ENCODE measurements at regions of chr3 and their contacts with region 1.

Region 1: DNA sequence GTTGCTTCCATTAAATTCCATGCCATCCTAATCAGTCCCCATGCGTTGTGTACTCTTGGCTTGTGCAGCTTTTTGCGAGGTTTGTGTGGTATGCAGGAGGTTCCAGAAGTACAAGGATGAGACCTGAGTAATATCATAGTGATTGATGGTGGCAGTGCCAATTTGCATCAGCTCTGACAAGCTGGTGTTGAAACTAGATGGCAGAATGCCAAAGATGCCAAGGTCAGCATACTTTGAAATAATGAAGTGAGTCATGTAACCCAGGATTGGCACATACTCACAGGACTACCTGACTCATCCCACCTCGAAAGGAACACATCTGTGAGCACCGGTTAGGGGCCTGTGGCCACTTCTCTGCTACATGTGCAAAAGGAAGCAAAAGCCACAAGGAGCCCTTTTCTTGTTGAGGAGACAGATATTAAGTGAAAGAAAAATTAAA is 14.3 kb downstream of the KAT2B start:
- DNase-seq: peak; percentile 100
- H3K4me3 Mint-ChIP-seq: no peak overlapping the region
- H3K27ac Mint-ChIP-seq: no peak overlapping the region
- H3K4me1 Mint-ChIP-seq: no peaks in the 10 kb centered on the region
- H3K27me3 Mint-ChIP-seq: no peaks in the 10 kb centered on the region
- CTCF ChIP-seq: no peak

Region 2: DNA sequence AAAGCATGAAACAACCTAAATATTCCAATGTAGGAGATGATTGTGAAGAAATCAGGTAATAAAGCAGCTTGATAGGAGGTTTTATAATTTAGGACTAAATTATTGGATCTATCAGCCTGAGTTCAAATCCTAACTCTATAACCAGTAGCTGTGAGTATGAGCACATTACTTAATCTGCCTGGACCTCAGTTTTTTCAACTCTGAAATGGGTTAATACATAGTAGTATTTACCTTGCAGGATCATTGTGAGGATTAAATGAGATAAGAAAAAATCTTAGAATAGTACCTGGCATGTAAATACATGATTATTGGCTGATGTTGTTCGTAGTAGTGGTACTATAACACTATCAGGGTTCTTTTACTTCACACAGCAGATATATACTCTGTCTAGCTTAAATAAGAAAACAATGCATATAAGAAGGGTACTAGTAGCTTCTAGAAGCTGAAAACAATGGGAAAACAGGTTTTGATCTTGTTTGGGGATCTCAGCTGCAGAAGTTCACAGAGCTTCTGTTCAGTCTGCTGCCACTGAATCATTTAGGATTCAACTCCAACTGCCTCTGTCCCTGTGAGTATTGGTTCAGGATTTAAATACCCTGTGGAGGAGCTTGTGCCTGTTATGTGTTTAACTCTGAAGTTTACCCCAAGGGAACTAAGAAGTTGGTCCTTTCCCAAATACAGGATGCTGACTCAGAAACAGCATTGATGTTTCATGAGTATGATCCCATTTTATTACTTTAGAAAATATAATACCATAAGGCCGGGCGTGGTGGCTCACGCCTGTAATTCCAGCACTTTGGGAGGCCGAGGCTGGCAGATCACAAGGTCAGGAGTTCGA is 19.9 kb after region 1 on chr3:
- CTCF ChIA-PET with region 1: no interaction called
- POLR2A ChIA-PET with region 1: interaction called, 11 read pairs
- intact Hi-C with region 1: no loop called
- DNase-seq: peak; percentile 21
- H3K4me3 Mint-ChIP-seq: no peak overlapping the region
- H3K27ac Mint-ChIP-seq: no peak overlapping the region
- H3K4me1 Mint-ChIP-seq: no peaks in the 10 kb centered on the region
- H3K27me3 Mint-ChIP-seq: no peaks in the 10 kb centered on the region
- CTCF ChIP-seq: no peak